Sigmoid colon (tissue), 7 donors: ENCODE measurements at regions of chr2 and their contacts with region 1.

Region 1: GRCh38 chr2:60881047-60881932 is at the start of gene REL:
- DNase-seq: peak; percentile 95
- H3K4me3 ChIP-seq: peak within 1 kb of the TSS; percentile 69 to 95 (median 90)
- H3K27ac ChIP-seq: peak within 1 kb of the TSS; percentile 93 to 99 (median 97)
- H3K4me1 ChIP-seq: peaks cover 0 to 44% (median 22%) of the 10 kb centered on the region in 4 donors
- H3K27me3 ChIP-seq: no peaks in the 10 kb centered on the region
- CTCF ChIP-seq: peak in 1 of 4 experiments; percentile 20
- EP300 ChIP-seq: no peak
- POLR2A ChIP-seq: peak; percentile 72 to 86
- total RNA-seq, gene REL: 11.0 to 14.7 (median 12.5) TPM

Region 2: DNA sequence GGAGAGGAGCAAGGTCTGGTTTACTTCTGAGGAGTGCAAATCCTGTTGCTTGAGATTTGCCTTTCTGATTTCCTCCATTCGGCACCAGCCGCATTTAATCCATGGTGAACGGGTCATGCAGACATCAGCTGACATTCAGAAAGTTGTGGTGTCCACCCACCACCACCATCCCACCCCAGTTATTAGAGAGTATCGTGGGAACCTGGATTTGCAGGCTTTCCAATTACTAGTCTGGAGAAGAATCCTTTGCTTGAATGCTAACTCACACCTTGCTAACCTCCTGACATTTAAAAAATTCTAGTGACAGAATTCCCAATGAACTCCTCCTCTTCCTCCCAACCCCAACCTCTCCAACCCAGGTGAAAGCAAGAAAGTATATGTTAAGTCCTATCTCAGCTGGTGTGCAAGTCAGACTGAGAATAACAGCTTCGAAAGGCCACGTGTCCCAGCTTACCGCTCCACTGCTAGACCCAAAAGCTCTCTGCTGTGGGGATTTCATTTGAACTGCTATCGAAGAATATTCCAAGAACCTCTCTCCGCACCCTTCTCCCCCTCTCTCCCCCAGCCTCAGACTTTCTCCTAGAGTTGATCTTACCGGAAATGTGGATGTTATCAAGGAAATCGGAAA is 345.5 kb before region 1 on chr2:
- intact Hi-C with region 1: no loop called
- DNase-seq: no peak
- H3K4me3 ChIP-seq: no peak overlapping the region
- H3K27ac ChIP-seq: peak overlapping the region in 3 of 4 donors; percentile 69 to 75 (median 70)
- H3K4me1 ChIP-seq: peaks cover 0 to 100% (median 82%) of the 10 kb centered on the region in 4 donors
- H3K27me3 ChIP-seq: no peaks in the 10 kb centered on the region
- CTCF ChIP-seq: no peak
- EP300 ChIP-seq: no peak
- POLR2A ChIP-seq: no peak

Region 3: GRCh38 chr2:60756191-60757041 is 124.9 kb before region 1 on chr2 and contains the start of gene PAPOLG:
- intact Hi-C with region 1: loop called (anchors 2 kb)
- DNase-seq: peak; percentile 97
- H3K4me3 ChIP-seq: peak within 1 kb of the TSS; percentile 86 to 92 (median 88)
- H3K27ac ChIP-seq: peak within 1 kb of the TSS; percentile 88 to 94 (median 90)
- H3K4me1 ChIP-seq: peaks cover 0 to 13% (median 11%) of the 10 kb centered on the region in 4 donors
- H3K27me3 ChIP-seq: no peaks in the 10 kb centered on the region
- CTCF ChIP-seq: no peak
- EP300 ChIP-seq: no peak
- POLR2A ChIP-seq: peak in 1 of 2 donors; percentile 69
- total RNA-seq, gene PAPOLG: 10.7 to 16.1 (median 14.0) TPM

Region 4: DNA sequence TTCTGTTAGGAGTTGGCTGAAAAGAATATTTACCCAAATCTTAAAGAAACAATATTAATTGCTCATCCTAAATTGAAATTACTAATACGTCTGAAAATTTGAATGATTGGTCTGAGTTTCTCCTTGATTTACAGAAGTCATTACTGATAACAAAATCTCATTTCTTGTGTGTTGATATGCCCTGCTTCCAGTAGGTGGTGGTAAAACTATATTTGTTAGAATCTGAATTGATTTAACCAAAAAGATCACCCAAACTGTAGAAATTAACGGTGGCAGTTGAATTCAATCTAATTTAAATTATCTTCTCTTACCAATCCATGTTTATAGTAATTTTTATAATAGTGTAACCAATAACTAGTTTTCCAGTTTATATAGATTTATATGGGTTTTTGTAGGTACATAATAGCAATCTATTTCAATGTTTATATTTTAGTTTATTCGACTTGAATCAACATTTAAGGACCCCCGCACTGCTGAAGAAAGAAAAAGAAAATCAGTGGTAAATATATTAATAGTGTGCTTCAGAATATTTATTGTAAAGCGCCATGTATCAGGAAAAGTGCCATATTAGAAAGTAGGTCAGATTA is 86.9 kb before region 1 on chr2:
- intact Hi-C with region 1: loop called (anchors 5 kb)
- DNase-seq: no peak
- H3K4me3 ChIP-seq: no peak overlapping the region
- H3K27ac ChIP-seq: no peak overlapping the region
- H3K4me1 ChIP-seq: no peaks in the 10 kb centered on the region
- H3K27me3 ChIP-seq: no peaks in the 10 kb centered on the region
- CTCF ChIP-seq: peak in 1 of 4 experiments; percentile 15
- EP300 ChIP-seq: no peak
- POLR2A ChIP-seq: no peak

Region 5: DNA sequence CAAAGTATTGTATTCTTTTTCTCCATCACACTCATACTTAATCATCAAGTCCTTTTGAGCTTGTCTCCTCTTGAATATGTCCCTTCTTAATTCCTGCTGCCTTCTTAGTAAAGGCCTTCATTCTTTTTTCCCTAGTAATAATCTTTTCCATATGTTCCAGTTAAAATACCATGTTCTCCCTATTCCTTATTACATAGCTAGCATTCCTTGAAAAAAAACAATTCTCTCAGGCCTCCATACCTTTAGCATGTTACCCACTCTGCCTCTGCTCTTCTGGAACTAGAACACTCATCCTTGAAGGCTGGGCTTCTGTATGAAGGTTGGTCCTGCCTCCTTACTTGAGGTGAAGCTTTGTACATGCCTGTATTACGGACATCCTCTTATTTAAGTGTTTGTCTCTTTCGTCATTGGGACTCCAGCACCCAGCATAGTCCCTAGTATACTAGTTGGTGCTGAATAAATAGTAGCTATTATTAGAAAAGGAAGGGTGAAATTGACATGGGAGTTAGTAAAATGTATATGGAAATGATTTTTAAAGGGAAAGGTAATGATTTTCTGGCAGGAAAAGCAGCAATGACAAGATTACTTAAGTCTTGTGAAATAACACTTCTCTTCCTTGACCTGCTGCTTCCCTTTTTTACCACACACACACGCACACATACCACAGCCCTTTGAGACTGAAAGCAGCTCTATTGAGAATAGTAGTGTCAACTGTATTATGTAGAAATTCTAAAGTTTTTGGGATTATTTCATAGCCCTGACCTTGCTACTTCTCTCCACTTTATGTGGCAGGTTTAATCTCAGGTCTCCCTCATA is 45.7 kb after region 1 on chr2:
- intact Hi-C with region 1: no loop called
- DNase-seq: no peak
- H3K4me3 ChIP-seq: no peak overlapping the region
- H3K27ac ChIP-seq: no peak overlapping the region
- H3K4me1 ChIP-seq: peaks cover 0 to 10% (median 3%) of the 10 kb centered on the region in 4 donors
- H3K27me3 ChIP-seq: no peaks in the 10 kb centered on the region
- CTCF ChIP-seq: no peak
- EP300 ChIP-seq: no peak
- POLR2A ChIP-seq: no peak

Region 6: GRCh38 chr2:61016808-61017555 is 135.7 kb after region 1 on chr2:
- intact Hi-C with region 1: loop called (anchors 5 kb)
- DNase-seq: peak; percentile 84
- H3K4me3 ChIP-seq: peak overlapping the region; percentile 80 to 96 (median 88)
- H3K27ac ChIP-seq: peak overlapping the region; percentile 91 to 96 (median 92)
- H3K4me1 ChIP-seq: peaks cover 0 to 34% (median 16%) of the 10 kb centered on the region in 4 donors
- H3K27me3 ChIP-seq: no peaks in the 10 kb centered on the region
- CTCF ChIP-seq: no peak
- EP300 ChIP-seq: no peak
- POLR2A ChIP-seq: peak in 1 of 2 donors; percentile 15

Region 7: DNA sequence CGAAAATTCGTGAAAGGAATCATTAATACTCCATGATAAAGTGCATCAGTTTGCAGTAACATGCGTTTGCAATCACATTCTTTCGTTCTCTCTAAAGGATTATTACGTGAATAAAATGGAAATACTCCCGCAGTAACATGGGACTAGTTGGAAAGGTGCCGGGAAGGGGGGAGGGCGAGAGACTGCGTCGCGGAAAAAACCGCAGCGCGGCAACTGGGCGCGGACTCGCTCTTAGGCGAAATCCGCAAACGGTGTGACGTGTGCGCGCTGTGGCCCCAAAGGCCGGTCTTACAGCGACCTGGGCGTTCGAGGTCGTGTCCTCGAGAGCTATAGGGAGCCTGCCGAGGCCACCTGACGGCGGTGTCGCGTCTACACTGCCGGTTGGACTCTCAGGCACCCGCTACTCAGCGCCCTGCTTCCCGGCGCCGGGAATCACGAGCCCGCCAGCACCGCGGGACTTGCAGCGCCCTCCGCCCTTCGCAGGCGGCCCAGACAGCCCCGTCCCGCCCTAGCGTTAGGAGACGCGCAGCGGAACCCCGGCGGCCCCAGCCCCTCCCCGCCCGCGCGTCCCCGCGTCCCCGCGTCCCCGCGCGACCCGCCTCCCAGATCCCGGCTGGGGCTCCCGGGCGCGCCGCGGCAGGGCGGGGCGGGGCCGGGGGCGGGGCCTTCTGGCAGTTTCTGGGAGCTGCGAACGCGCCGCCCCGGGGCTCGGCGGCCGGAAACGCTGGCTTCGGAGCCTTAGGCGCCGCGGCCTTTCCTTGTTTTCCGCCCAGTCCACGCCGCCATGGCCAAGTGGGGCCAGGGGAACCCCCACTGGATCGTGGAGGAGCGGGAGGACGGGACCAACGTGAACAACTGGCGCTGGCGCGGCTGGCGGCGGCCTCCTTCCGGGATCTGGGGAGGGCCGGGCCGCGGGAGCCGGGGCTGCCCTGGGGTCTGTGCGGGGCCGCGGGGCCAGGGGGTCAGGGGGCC is 295.8 kb after region 1 on chr2:
- intact Hi-C with region 1: loop called (anchors 2 kb)
- DNase-seq: peak; percentile 96
- H3K4me3 ChIP-seq: peak overlapping the region; percentile 74 to 94 (median 88)
- H3K27ac ChIP-seq: peak overlapping the region; percentile 97 to 99 (median 98)
- H3K4me1 ChIP-seq: peaks cover 0 to 47% (median 46%) of the 10 kb centered on the region in 4 donors
- H3K27me3 ChIP-seq: no peaks in the 10 kb centered on the region
- CTCF ChIP-seq: no peak
- EP300 ChIP-seq: peak in 2 of 4 donors; percentile 45 to 70
- POLR2A ChIP-seq: peak; percentile 64 to 79